MCF 10A (cell line): ENCODE measurements at regions of chr20 and their contacts with region 1.

Region 1: GRCh38 chr20:32652739-32653526 is 20.8 kb downstream of the C20orf203 start:
- DNase-seq: peak; percentile 84
- H3K4me3 Mint-ChIP-seq: no peak overlapping the region
- H3K27ac Mint-ChIP-seq: no peak overlapping the region
- H3K4me1 Mint-ChIP-seq: peaks cover 3% of the 10 kb centered on the region
- H3K27me3 Mint-ChIP-seq: no peaks in the 10 kb centered on the region
- CTCF ChIP-seq: peak; percentile 94

Region 2: GRCh38 chr20:32532246-32532645 is 120.7 kb before region 1 on chr20:
- CTCF ChIA-PET with region 1: interaction called, 12 read pairs
- POLR2A ChIA-PET with region 1: interaction called, 5 read pairs
- intact Hi-C with region 1: no loop called
- DNase-seq: no peak
- H3K4me3 Mint-ChIP-seq: no peak overlapping the region
- H3K27ac Mint-ChIP-seq: no peak overlapping the region
- H3K4me1 Mint-ChIP-seq: peaks cover 5% of the 10 kb centered on the region
- H3K27me3 Mint-ChIP-seq: no peaks in the 10 kb centered on the region
- CTCF ChIP-seq: no peak

Region 3: GRCh38 chr20:32638848-32639247 is 14.1 kb before region 1 on chr20:
- CTCF ChIA-PET with region 1: interaction called, 32 read pairs
- POLR2A ChIA-PET with region 1: interaction called, 6 read pairs
- intact Hi-C with region 1: no loop called
- DNase-seq: peak; percentile 61
- H3K4me3 Mint-ChIP-seq: no peak overlapping the region
- H3K27ac Mint-ChIP-seq: no peak overlapping the region
- H3K4me1 Mint-ChIP-seq: no peaks in the 10 kb centered on the region
- H3K27me3 Mint-ChIP-seq: no peaks in the 10 kb centered on the region
- CTCF ChIP-seq: no peak

Region 4: GRCh38 chr20:32664678-32665159 is 11.8 kb after region 1 on chr20:
- CTCF ChIA-PET with region 1: interaction called, 25 read pairs
- POLR2A ChIA-PET with region 1: no interaction called
- intact Hi-C with region 1: no loop called
- DNase-seq: no peak
- H3K4me3 Mint-ChIP-seq: no peak overlapping the region
- H3K27ac Mint-ChIP-seq: no peak overlapping the region
- H3K4me1 Mint-ChIP-seq: peaks cover 6% of the 10 kb centered on the region
- H3K27me3 Mint-ChIP-seq: no peaks in the 10 kb centered on the region
- CTCF ChIP-seq: no peak